PC-3 (cell line): ENCODE measurements at regions of chr11 and their contacts with region 1.

Region 1: GRCh38 chr11:2532704-2533586 is 88.1 kb downstream of the KCNQ1 start:
- DNase-seq: peak; percentile 93
- ATAC-seq: peak; percentile 56
- H3K4me3 ChIP-seq: peak overlapping the region; percentile 66
- H3K27ac ChIP-seq: peak overlapping the region; percentile 92
- H3K4me1 ChIP-seq: peaks cover 20% of the 10 kb centered on the region
- H3K27me3 ChIP-seq: no peaks in the 10 kb centered on the region
- CTCF ChIP-seq: peak; percentile 97

Region 2: DNA sequence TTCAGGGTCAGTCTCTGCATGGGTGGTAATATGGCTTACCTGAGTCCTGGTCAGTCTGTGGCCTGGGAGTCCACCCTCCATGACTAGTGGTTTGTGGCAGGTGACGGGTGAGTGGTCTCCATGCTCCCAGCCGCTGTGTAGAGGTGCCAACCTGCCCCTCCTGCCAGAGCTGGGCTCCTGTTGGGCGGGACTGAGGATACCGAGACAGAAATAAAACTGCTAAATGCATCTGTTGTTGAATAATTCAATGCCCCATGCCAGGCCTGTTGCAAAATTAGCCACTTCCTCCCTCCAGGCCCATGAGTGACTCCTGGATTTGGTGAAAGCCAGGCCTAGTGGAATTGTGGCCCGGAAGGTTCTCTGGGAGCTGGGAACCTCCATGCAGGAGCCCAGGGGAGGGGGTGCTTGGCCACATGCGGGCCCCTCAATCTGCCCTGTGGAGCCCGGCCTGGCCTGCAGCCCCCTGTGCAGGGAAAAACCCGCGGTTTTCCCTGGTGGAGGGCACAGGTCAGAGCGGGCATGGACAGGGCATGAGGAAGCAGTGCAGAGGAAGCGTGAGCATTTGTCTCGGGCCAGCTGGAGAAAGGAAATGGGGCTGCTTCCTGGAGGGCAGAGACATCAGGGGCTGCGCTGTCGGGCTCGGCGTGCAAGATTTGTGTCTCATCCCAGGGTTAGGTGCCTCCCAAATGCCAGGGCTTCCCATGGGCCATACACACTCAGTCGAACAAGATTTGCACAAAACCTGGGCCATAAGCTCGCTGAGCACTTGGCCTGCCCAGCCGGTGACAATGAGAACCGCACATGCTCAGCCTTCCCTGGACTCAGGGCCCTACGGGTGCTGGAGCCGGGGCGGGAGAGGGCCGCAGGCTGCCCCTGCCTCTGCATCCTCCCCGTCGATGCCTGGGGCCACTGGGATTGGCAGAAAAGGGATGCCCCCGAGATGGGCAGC is 21.2 kb before region 1 on chr11:
- CTCF ChIA-PET with region 1: no interaction called
- POLR2A ChIA-PET with region 1: no interaction called
- intact Hi-C with region 1: no loop called
- DNase-seq: no peak
- ATAC-seq: no peak
- H3K4me3 ChIP-seq: no peak overlapping the region
- H3K27ac ChIP-seq: no peak overlapping the region
- H3K4me1 ChIP-seq: no peaks in the 10 kb centered on the region
- H3K27me3 ChIP-seq: peaks cover 9% of the 10 kb centered on the region; the same call in 1 of the 2 replicates
- CTCF ChIP-seq: no peak

Region 3: DNA sequence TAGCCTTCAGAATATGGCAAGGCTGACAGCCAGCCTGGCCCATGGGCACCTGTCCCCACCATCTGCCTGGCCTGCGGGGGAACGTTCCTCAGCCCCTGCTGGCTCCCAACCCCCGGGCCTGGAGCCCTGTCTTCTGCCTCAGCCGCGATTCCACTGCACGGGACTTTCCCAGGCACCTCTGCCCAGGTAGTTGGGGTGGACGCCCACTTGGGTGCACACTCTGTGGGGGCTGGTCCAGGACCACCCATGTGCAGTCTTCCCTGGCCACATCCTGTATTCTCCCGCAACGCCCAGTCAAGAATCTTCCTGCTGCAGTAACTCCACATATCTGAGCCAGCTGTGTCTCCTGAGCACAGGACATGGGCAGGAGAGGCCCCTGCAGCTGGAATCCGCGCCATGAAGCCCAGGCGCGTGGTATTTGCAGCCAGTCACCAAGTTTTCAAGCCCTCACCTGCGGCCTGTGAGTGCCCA is 10.2 kb before region 1 on chr11:
- CTCF ChIA-PET with region 1: no interaction called
- POLR2A ChIA-PET with region 1: no interaction called
- intact Hi-C with region 1: no loop called
- DNase-seq: no peak
- ATAC-seq: no peak
- H3K4me3 ChIP-seq: no peak overlapping the region
- H3K27ac ChIP-seq: no peak overlapping the region
- H3K4me1 ChIP-seq: no peaks in the 10 kb centered on the region
- H3K27me3 ChIP-seq: no peaks in the 10 kb centered on the region
- CTCF ChIP-seq: no peak

Region 4: GRCh38 chr11:2699531-2700414 is 166.8 kb after region 1 on chr11 and contains the start of gene KCNQ1OT1:
- CTCF ChIA-PET with region 1: no interaction called
- POLR2A ChIA-PET with region 1: no interaction called
- intact Hi-C with region 1: loop called (anchors 5 kb)
- DNase-seq: peak; percentile 92
- ATAC-seq: peak; percentile 90
- H3K4me3 ChIP-seq: peak within 1 kb of the TSS; percentile 94
- H3K27ac ChIP-seq: peak within 1 kb of the TSS; percentile 78
- H3K4me1 ChIP-seq: peaks cover 13% of the 10 kb centered on the region; the same call in 1 of the 2 replicates
- H3K27me3 ChIP-seq: no peaks in the 10 kb centered on the region
- CTCF ChIP-seq: no peak
- total RNA-seq, gene KCNQ1OT1: 1.5 and 1.7 TPM in 2 replicates

Region 5: GRCh38 chr11:2791521-2792380 is 258.8 kb after region 1 on chr11:
- CTCF ChIA-PET with region 1: no interaction called
- POLR2A ChIA-PET with region 1: no interaction called
- intact Hi-C with region 1: no loop called
- DNase-seq: no peak
- ATAC-seq: no peak; the same call in 1 of the 2 replicates
- H3K4me3 ChIP-seq: peak overlapping the region; percentile 46; the same call in 1 of the 2 replicates
- H3K27ac ChIP-seq: no peak overlapping the region
- H3K4me1 ChIP-seq: no peaks in the 10 kb centered on the region
- H3K27me3 ChIP-seq: no peaks in the 10 kb centered on the region
- CTCF ChIP-seq: no peak

Region 6: DNA sequence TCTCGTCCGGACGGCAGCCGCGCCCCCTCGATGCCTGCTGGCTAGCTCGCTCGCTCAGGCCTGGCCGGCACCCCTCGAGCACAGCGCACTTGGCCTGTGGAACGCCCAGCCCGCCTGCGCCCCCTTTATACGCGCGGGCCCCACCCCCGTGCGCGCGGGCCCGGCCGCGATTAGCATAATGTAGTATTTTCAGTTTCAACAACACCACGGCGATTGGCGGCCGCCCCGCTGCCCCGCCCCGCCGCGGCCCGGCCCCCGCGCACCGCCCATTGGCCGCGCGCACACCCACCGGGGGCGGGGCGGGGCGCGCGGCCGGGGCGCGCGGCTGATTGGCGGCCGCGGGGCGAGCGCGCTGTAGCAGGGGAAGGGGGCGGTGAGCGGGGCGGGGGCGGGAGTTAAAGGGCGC is 352.7 kb after region 1 on chr11 and contains the start of gene CDKN1C:
- CTCF ChIA-PET with region 1: interaction called, 40 read pairs
- POLR2A ChIA-PET with region 1: no interaction called
- intact Hi-C with region 1: loop called (anchors 1 kb)
- DNase-seq: peak; percentile 75
- ATAC-seq: peak; percentile 59
- H3K4me3 ChIP-seq: peak within 1 kb of the TSS; percentile 82
- H3K27ac ChIP-seq: no peak within 1 kb of the TSS
- H3K4me1 ChIP-seq: peaks cover 11% of the 10 kb centered on the region
- H3K27me3 ChIP-seq: no peaks in the 10 kb centered on the region
- CTCF ChIP-seq: no peak
- total RNA-seq, gene CDKN1C: 12.0 and 12.9 TPM in 2 replicates

Region 7: GRCh38 chr11:2892215-2893020 is 359.5 kb after region 1 on chr11:
- CTCF ChIA-PET with region 1: interaction called, 40 read pairs
- POLR2A ChIA-PET with region 1: no interaction called
- intact Hi-C with region 1: loop called (anchors 1 kb)
- DNase-seq: peak; percentile 59
- ATAC-seq: peak; percentile 54
- H3K4me3 ChIP-seq: peak overlapping the region; percentile 63
- H3K27ac ChIP-seq: peak overlapping the region; percentile 52
- H3K4me1 ChIP-seq: peaks cover 28% of the 10 kb centered on the region
- H3K27me3 ChIP-seq: no peaks in the 10 kb centered on the region
- CTCF ChIP-seq: peak; percentile 88

Region 8: DNA sequence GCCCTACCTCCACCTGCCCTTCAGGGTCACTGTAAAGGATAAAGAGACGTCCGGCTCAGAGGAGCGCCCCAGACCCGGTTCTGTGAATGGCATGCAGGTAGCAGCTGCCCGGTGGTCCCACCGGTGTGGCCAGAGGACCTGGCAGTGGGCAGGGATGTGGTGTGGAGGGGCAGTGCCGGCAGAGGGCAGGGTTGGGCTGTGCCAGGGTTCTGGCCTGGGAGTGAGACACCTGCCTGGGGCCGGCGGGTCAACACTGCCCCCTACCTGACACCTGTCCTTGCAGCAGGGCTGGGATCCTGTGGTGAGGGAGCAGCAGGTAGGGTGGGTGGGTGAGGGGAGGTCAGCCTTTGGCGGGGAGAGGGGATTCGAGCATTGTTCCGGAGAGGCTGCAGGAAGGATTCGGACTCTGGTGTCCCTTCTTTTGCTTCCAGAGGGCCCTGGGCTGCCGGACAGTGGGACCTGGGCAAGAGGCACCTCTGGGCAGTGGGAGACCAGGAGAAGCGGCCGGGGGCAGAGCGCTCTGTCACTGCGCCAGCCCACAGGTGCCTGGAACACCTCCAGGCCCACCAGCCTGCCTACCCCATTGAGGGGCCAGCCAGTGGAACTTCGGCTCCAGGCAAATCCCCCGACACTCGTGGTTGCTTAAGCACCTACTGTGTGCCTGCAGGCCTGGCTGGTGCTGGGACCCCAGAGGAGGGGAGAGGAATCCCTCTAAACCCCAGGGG is 397.9 kb after region 1 on chr11:
- CTCF ChIA-PET with region 1: interaction called, 4 read pairs
- POLR2A ChIA-PET with region 1: no interaction called
- intact Hi-C with region 1: loop called (anchors 1 kb)
- DNase-seq: peak; percentile 84
- ATAC-seq: peak; percentile 45
- H3K4me3 ChIP-seq: peak overlapping the region; percentile 78
- H3K27ac ChIP-seq: peak overlapping the region; percentile 99
- H3K4me1 ChIP-seq: peaks cover 43% of the 10 kb centered on the region
- H3K27me3 ChIP-seq: no peaks in the 10 kb centered on the region
- CTCF ChIP-seq: peak; percentile 87